ENCODE measurements at regions of chr16 and their contacts with region 1.

Region 1: GRCh38 chr16:56964243-56965148 is 2.7 kb downstream of the CETP start:
- DNase-seq: peak; percentile 100
- ATAC-seq: peak; percentile 92
- H3K4me3 Mint-ChIP-seq: no peak overlapping the region
- H3K27ac Mint-ChIP-seq: peak overlapping the region; percentile 94
- H3K4me1 Mint-ChIP-seq: peaks cover 23% of the 10 kb centered on the region
- H3K27me3 Mint-ChIP-seq: no peaks in the 10 kb centered on the region
- CTCF ChIP-seq: peak; percentile 99

Region 2: GRCh38 chr16:56583351-56584168 is 380.9 kb before region 1 on chr16:
- CTCF ChIA-PET with region 1: no interaction called
- POLR2A ChIA-PET with region 1: no interaction called
- intact Hi-C with region 1: no loop called
- DNase-seq: no peak
- ATAC-seq: no peak
- H3K4me3 Mint-ChIP-seq: no peak overlapping the region
- H3K27ac Mint-ChIP-seq: no peak overlapping the region
- H3K4me1 Mint-ChIP-seq: no peaks in the 10 kb centered on the region
- H3K27me3 Mint-ChIP-seq: peaks cover 3% of the 10 kb centered on the region
- CTCF ChIP-seq: no peak

Region 3: DNA sequence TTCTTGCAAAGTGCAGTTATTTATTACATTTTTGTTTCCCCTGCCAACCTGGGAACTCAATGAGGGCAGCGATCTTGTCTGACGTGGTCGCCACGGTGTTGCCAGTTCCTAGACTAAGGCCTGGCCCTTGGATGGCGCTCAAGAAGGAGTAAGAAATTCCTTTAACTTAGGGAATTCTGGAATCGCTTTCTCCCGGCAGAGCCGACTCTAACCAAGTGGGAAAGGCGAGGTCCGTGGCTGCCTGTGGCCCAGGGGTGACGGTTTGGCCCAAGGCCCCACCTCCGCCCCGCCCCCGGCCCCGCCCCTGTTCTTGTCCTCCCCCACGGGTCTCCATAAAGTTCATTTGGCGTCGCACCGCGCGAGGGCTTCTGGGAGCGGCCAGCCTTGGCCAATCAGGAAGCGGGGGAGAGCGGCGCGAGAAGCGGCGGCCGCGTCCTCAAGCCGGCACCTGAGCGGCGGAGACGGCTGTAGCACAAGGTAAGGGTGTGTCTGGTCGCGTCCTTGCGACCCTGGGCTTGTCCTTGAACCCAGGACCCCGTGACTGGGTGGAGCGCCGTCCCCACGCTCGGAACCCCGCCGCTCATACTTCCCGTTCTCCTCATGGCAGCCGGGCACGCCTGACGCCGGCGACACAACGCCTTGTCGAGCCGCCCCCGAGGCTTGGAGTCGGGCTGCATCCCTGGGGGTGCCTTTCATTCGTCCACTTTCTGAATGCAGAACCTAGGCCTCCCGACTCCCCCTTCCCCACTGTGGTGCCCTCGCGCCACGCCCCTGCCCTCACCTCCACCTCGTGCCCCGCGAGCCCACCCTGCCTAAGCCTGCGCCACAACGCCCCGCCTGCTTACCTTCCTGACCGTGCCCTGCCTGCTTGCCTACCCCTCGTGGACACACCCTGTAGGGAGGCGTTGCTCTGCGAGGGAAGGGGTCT is 234.5 kb before region 1 on chr16 and contains the start of gene NUP93:
- CTCF ChIA-PET with region 1: no interaction called
- POLR2A ChIA-PET with region 1: no interaction called
- intact Hi-C with region 1: no loop called
- DNase-seq: peak; percentile 94
- ATAC-seq: peak; percentile 89
- H3K4me3 Mint-ChIP-seq: no peak within 1 kb of the TSS
- H3K27ac Mint-ChIP-seq: peak within 1 kb of the TSS; percentile 80
- H3K4me1 Mint-ChIP-seq: peaks cover 13% of the 10 kb centered on the region
- H3K27me3 Mint-ChIP-seq: no peaks in the 10 kb centered on the region
- CTCF ChIP-seq: no peak
- total RNA-seq, gene NUP93: 171 to 191 TPM

Region 4: GRCh38 chr16:56950881-56951771 is 13.4 kb before region 1 on chr16:
- CTCF ChIA-PET with region 1: interaction called, 93 read pairs
- POLR2A ChIA-PET with region 1: interaction called, 5 read pairs
- intact Hi-C with region 1: no loop called
- DNase-seq: peak; percentile 82
- ATAC-seq: peak; percentile 95
- H3K4me3 Mint-ChIP-seq: no peak overlapping the region
- H3K27ac Mint-ChIP-seq: peak overlapping the region; percentile 10
- H3K4me1 Mint-ChIP-seq: peaks cover 19% of the 10 kb centered on the region
- H3K27me3 Mint-ChIP-seq: no peaks in the 10 kb centered on the region
- CTCF ChIP-seq: peak; percentile 80

Region 5: DNA sequence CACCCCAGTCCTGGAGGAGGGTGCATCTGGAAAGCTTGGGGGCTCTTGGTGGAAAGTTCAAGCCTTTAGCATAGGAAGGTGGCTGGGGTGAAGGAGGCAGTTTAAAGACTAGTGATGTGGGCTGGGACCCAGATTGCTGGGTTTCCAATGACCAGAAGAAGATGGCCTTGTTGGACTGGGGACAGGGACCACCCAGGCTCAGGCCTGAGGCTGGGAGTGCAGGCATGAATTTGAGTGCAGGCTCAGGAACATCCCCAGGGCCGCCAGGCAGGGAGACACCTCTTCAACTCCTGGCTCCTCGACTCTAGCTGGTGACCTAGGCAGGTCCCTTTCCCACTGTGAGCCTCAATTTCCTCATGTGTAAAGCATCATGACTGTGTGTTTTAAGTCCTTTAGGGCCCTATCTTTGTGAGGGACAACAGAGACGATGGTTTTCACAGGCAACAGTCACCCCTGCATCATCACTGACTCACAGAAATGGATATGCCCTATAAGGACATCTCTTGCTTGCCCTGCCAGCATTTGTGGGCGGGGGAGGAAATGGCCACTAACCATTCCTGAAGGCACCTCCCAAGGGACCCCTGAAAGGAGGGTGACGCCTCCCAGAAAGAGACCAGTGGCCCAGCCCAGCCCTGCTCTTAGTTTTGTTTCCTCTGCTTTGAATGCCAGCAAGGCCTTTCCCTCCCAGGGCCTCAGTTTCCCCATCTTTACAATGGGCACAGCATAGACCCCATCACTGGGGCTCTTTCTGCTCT is 36.0 kb after region 1 on chr16:
- CTCF ChIA-PET with region 1: interaction called, 33 read pairs
- POLR2A ChIA-PET with region 1: interaction called, 3 read pairs
- intact Hi-C with region 1: no loop called
- DNase-seq: peak; percentile 88
- ATAC-seq: peak; percentile 84
- H3K4me3 Mint-ChIP-seq: peak overlapping the region; percentile 51
- H3K27ac Mint-ChIP-seq: peak overlapping the region; percentile 99
- H3K4me1 Mint-ChIP-seq: peaks cover 94% of the 10 kb centered on the region
- H3K27me3 Mint-ChIP-seq: no peaks in the 10 kb centered on the region
- CTCF ChIP-seq: no peak

Region 6: DNA sequence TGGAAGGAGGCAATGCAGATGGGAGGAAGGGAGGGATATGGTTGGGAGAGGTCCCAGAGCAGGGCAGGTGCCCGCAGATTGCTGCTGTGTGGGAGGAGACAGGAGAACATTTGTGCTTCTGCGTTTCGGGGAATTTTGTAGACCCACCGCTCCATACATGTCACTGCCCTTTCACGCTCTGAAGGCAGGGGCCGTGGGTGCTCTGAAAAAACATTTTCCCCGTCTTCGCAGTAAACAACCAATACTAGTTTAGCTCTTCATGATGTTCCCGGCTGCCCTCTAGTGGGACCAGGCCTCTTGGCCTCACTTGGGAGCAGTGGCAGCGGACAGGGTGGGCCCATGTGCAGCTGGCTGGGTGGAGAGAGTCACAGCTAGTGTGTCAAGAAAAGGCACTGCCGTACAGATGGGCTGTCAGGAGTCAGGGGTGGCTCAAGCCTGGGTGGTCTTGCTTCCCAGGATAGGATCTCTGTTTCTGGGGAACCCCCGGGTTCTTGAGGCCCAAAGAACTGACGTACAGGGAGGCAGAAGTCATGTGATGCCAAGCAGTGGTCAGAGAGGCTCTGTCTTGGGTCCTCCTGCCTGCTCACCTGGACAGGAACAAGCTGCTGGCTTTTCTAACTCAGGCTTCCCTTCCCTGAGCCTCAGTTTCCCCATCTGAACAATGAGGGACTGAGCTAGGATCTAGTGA is 81.3 kb after region 1 on chr16:
- CTCF ChIA-PET with region 1: interaction called, 61 read pairs
- POLR2A ChIA-PET with region 1: interaction called, 4 read pairs
- intact Hi-C with region 1: loop called (anchors 1 kb)
- DNase-seq: peak; percentile 77
- ATAC-seq: no peak
- H3K4me3 Mint-ChIP-seq: no peak overlapping the region
- H3K27ac Mint-ChIP-seq: peak overlapping the region; percentile 99
- H3K4me1 Mint-ChIP-seq: peaks cover 77% of the 10 kb centered on the region
- H3K27me3 Mint-ChIP-seq: no peaks in the 10 kb centered on the region
- CTCF ChIP-seq: no peak

Region 7: DNA sequence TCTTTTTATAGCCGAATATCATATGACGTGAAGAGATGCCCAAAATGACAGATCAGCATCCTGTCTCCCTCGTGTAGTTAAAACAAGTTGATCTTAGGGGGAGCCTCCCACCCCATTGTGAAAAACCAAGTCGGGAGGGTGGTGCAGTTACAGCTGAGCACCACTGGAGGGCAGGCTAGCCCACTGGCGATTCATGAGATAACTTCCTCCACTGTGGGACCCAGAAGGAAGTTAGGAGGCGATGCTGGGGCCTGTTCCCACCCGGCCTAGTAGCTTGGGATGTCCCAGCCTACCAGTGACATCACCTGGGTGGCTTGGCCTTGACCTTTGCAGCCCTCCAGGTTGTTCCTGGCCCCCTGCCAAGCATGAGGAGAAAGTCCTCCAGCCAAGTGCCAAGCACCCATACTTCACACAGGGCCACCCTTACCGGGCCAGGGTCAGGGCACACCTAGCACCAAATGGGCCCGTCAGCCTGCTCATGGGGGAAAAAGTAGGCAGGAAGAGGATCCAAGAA is 119.8 kb after region 1 on chr16:
- CTCF ChIA-PET with region 1: interaction called, 28 read pairs
- POLR2A ChIA-PET with region 1: no interaction called
- intact Hi-C with region 1: no loop called
- DNase-seq: peak; percentile 88
- ATAC-seq: peak; percentile 95
- H3K4me3 Mint-ChIP-seq: no peak overlapping the region
- H3K27ac Mint-ChIP-seq: peak overlapping the region; percentile 56
- H3K4me1 Mint-ChIP-seq: peaks cover 10% of the 10 kb centered on the region
- H3K27me3 Mint-ChIP-seq: no peaks in the 10 kb centered on the region
- CTCF ChIP-seq: peak; percentile 97

Measured in activated CD8-positive, alpha-beta T cell treated with anti-CD3 and anti-CD28 coated beads for 36 hours (primary cell).